ENCODE measurements at regions of chr9 and their contacts with region 1.

Region 1: DNA sequence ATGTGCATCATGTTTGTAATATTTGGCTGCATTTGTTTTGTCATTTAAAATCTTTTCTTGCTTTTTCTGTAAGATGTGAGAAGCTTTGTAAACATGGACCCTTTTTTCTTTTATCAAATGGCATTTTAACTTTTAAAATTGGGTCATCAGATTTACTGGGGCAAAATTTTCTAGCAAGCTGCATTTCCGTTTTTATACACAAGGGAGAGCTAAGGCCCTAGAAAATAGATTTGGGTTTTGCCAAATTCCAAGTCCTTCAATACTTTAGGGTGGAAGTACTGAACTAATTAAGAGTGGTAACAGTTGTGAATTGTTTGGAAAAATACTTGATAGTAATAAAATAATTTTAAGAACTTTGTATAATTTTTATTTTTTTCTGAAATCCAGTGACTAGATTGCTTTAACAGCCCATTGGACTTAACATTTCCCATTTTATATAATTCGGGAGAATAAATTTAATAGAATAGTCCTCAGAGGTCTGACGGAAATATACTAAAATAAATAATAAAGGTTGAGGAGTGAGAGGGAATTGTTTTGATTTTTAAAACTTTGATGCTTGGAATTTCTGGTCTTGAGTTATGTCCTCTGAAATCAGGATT is 117.4 kb downstream of the SMARCA2 start:
- DNase-seq: no peak
- H3K4me3 Mint-ChIP-seq: no peak overlapping the region
- H3K27ac Mint-ChIP-seq: no peak overlapping the region
- H3K4me1 Mint-ChIP-seq: peaks cover 17% of the 10 kb centered on the region
- H3K27me3 Mint-ChIP-seq: no peaks in the 10 kb centered on the region

Region 2: DNA sequence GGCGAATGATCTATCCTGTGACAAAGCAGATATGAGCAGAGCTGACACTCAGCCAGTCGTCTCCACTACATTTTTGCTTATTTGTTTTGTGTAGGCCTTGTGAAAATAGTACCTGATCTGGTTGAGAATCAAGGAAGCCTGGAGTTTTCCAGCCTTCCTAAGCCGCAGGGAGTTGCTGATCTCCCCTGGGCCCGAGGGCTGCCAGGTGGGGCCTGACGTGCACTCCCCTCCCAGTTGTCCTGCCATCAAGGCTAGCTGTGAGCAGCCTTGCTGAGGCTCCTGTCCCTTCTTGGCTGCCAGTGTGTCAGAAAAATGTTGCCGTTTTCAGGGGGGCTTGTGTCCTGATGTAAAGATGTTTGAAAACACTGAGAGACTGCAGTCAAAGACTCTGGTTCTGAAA is 15.1 kb before region 1 on chr9:
- CTCF ChIA-PET with region 1: interaction called, 11 read pairs
- POLR2A ChIA-PET with region 1: no interaction called
- intact Hi-C with region 1: no loop called
- DNase-seq: no peak
- H3K4me3 Mint-ChIP-seq: no peak overlapping the region
- H3K27ac Mint-ChIP-seq: no peak overlapping the region
- H3K4me1 Mint-ChIP-seq: no peaks in the 10 kb centered on the region
- H3K27me3 Mint-ChIP-seq: no peaks in the 10 kb centered on the region

Region 3: GRCh38 chr9:2181792-2182191 is 49.2 kb after region 1 on chr9:
- CTCF ChIA-PET with region 1: interaction called, 27 read pairs
- POLR2A ChIA-PET with region 1: no interaction called
- intact Hi-C with region 1: loop called (anchors 1 kb)
- DNase-seq: peak; percentile 29
- H3K4me3 Mint-ChIP-seq: no peak overlapping the region
- H3K27ac Mint-ChIP-seq: no peak overlapping the region
- H3K4me1 Mint-ChIP-seq: peaks cover 6% of the 10 kb centered on the region
- H3K27me3 Mint-ChIP-seq: no peaks in the 10 kb centered on the region

Measured in activated CD4-positive, alpha-beta memory T cell treated with anti-CD3 and anti-CD28 coated beads for 36 hours (primary cell).